Activated CD4-positive, alpha-beta T cell treated with anti-CD3 and anti-CD28 coated beads for 36 hours (primary cell): ENCODE measurements at regions of chr4 and their contacts with region 1.

Region 1: GRCh38 chr4:51895813-51896408 is 53.0 kb downstream of the DCUN1D4 start:
- DNase-seq: peak; percentile 68
- ATAC-seq: peak; percentile 97
- H3K4me3 Mint-ChIP-seq: no peak overlapping the region
- H3K27ac Mint-ChIP-seq: no peak overlapping the region
- H3K4me1 Mint-ChIP-seq: peaks cover 10% of the 10 kb centered on the region
- H3K27me3 Mint-ChIP-seq: no peaks in the 10 kb centered on the region

Region 2: DNA sequence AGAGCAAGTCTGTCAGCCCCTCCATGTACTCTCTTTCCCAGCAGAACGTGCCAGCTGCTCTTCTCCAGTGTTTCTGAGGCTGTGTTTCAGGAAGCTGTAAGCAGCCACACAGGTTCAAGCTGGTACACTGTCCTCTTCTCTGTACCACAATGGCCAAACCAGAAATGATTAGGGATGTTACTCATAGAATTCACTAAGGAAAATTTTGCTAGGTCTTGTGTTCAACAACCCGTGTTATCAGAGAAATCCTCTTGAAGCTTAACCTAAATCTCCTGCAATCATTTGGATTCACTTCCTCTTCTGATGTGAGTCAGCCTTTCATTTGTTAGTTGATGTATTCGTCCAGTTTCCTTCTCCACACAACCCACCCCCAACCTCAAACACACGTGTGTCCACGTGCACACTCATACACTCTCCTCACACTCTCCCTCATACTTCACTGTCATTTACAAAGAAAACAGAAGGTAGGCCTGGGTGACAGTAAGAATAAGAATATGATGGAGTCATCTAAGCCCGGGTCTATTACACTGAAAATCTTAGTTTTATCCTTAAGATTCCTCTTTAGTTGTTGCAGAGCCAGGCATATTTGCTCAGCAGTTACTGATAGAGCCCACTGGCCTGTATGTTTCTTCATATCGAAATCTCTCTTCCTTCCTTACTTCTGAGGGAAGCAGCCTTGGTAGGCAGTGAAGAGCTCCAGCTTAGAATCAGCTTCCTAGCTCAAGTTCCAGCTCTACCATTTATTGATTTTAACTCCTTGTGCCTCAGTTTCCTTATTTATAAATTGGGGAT is 10.5 kb after region 1 on chr4:
- CTCF ChIA-PET with region 1: interaction called, 12 read pairs
- POLR2A ChIA-PET with region 1: no interaction called
- intact Hi-C with region 1: no loop called
- DNase-seq: peak; percentile 37
- ATAC-seq: peak; percentile 84
- H3K4me3 Mint-ChIP-seq: no peak overlapping the region
- H3K27ac Mint-ChIP-seq: no peak overlapping the region
- H3K4me1 Mint-ChIP-seq: peaks cover 8% of the 10 kb centered on the region
- H3K27me3 Mint-ChIP-seq: no peaks in the 10 kb centered on the region

Region 3: DNA sequence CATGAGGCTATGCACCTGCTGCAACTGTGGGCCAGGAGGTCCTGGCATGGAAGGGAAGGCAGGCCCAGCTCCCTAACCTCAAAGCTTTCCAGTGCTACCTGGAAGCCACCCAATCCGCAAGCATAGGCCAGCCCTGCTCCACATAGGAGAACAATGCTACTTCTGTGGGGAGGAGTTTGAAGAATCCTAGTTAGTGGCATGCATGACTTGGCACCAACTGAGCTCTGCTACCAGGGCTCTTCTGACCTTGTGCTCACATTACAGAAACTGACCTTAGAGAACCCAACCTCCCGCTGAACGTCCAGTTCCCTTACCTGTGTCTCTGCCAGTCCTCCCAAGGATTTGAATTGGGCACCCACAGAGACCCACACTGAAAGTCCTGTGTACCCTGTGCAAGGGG is 704.4 kb after region 1 on chr4:
- CTCF ChIA-PET with region 1: no interaction called
- POLR2A ChIA-PET with region 1: no interaction called
- intact Hi-C with region 1: no loop called
- DNase-seq: no peak
- ATAC-seq: no peak
- H3K4me3 Mint-ChIP-seq: no peak overlapping the region
- H3K27ac Mint-ChIP-seq: no peak overlapping the region
- H3K4me1 Mint-ChIP-seq: no peaks in the 10 kb centered on the region
- H3K27me3 Mint-ChIP-seq: no peaks in the 10 kb centered on the region